CD4-positive, alpha-beta T cell (primary cell): ENCODE measurements at regions of chr19 and their contacts with region 1.

Region 1: DNA sequence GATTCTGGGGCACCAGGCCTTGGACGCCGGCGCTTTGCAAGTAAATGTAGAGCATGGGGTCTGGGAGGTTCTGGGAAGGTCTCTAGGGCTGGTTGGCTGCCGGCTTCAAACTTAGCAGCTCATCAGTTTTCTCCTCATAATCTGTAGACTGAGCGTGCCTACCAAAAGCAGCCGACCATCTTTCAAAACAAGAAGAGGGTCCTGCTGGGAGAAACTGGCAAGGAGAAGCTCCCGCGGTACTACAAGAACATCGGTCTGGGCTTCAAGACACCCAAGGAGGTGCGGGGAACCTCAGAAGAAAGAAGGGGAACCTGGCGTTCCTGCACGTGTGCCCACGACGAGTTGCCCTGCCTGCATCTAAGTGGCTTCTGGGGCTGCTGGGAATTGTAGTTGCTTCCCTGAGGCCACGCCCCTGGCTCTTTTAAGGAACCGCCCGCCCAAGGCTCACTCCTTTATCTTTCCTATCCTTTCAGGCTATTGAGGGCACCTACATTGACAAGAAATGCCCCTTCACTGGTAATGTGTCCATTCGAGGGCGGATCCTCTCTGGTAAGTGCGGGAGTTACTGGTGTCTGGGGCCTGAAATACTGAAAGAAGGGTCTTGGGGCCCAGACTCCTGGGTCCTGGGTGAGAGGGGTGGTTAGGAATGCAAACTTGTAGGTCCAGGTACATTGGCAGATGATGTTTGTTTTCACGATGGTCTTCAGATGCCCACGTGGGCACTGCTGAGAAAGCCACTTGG is 984 bp downstream of the RPS11 start:
- DNase-seq: peak; percentile 52 to 93 (median 73)
- ATAC-seq: peak; percentile 19
- H3K4me3 ChIP-seq: peak overlapping the region; percentile 99
- H3K4me3 Mint-ChIP-seq: peak overlapping the region; percentile 99
- H3K27ac ChIP-seq: peak overlapping the region; percentile 94 to 96
- H3K27ac Mint-ChIP-seq: peak overlapping the region; percentile 98
- H3K4me1 ChIP-seq: peaks cover 72% of the 10 kb centered on the region
- H3K4me1 Mint-ChIP-seq: peaks cover 70% of the 10 kb centered on the region
- H3K27me3 ChIP-seq: no peaks in the 10 kb centered on the region
- H3K27me3 Mint-ChIP-seq: no peaks in the 10 kb centered on the region
- CTCF ChIP-seq: no peak

Region 2: DNA sequence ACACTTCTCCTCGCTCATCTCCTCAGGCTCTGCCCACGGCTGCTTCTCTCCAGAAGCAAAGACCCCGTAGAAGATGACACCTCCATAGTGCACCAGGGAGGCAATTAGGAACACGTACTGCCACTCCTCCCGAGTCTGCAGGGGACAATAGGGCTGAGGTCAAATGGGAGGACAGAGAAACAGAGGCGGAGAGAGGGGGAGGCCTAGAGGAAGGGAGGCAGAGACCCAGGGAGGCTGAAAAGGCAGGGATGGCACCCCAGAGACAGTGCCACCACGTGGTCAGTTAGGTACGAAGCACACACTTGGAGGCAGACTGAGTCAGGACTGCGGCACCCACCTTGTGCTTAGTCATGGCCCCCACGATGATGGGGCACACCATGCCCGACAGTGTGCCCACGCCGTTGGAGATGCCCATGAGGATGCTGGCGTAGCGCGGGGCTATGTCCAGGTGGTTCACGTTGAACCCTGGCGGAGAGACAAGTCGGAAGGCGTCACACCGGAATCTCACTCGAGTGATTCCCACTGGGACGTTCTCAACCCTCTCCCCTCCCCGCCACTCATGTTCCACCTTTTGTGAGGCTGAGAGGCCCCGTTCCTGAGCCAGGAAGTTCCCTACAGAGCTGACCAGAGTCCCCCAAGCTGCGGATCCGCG is 66.4 kb before region 1 on chr19:
- CTCF ChIA-PET with region 1: no interaction called
- POLR2A ChIA-PET with region 1: no interaction called
- intact Hi-C with region 1: no loop called
- DNase-seq: peak in 3 of 14 experiments; percentile 38 to 63 (median 48)
- ATAC-seq: peak; percentile 31
- H3K4me3 ChIP-seq: no peak overlapping the region
- H3K4me3 Mint-ChIP-seq: no peak overlapping the region
- H3K27ac ChIP-seq: no peak overlapping the region
- H3K27ac Mint-ChIP-seq: no peak overlapping the region
- H3K4me1 ChIP-seq: peaks cover 58% of the 10 kb centered on the region
- H3K4me1 Mint-ChIP-seq: peaks cover 61% of the 10 kb centered on the region
- H3K27me3 ChIP-seq: peaks cover 94 to 98% of the 10 kb centered on the region in 2 experiments
- H3K27me3 Mint-ChIP-seq: peaks cover 98% of the 10 kb centered on the region
- CTCF ChIP-seq: peak; percentile 18

Region 3: GRCh38 chr19:49451430-49452181 is 45.6 kb before region 1 on chr19 and contains the start of gene PIH1D1:
- CTCF ChIA-PET with region 1: interaction called, 3 read pairs
- POLR2A ChIA-PET with region 1: interaction called, 28 read pairs
- intact Hi-C with region 1: loop called (anchors 1 to 2 kb)
- DNase-seq: peak; percentile 84 to 98 (median 92)
- ATAC-seq: peak; percentile 61
- H3K4me3 ChIP-seq: peak within 1 kb of the TSS; percentile 99
- H3K4me3 Mint-ChIP-seq: peak within 1 kb of the TSS; percentile 94
- H3K27ac ChIP-seq: peak within 1 kb of the TSS; percentile 93 to 97
- H3K27ac Mint-ChIP-seq: peak within 1 kb of the TSS; percentile 98
- H3K4me1 ChIP-seq: peaks cover 69% of the 10 kb centered on the region
- H3K4me1 Mint-ChIP-seq: peaks cover 50% of the 10 kb centered on the region
- H3K27me3 ChIP-seq: no peaks in the 10 kb centered on the region
- H3K27me3 Mint-ChIP-seq: no peaks in the 10 kb centered on the region
- CTCF ChIP-seq: no peak
- total RNA-seq, gene PIH1D1: 145 to 151 TPM

Region 4: DNA sequence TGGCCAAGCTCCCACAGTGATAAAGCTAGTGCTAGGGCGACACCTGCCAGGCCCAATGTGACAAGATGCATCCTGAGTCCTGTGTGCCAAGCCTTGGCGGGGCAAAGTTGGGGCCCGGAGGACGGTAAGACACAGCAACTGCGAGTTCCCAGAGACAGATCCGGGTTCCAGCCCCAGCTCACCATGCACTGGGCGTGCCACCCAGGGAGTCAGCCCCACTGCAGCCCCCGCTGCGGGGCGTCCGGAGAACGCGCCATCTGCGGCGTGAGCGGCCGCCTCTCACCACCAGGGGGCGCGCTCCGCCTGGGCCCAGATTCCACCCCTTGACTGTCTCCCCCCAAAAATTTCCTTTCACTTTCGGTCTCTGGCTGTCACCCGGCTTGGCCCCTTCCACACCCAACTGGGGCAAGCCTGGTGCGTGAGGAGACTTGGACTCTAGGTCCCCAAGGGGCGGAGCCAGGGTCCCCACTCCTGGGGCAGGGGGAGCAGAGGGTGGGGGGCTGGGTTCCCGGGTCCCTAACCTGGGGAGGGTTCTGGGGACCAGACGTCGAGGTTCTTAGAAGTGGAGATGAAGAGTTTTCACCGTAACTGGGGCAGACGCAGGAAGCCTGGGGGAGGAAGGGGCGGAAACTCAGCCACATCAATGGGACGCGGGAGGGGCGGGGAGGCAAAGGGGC is 23.2 kb before region 1 on chr19 and contains the start of gene FLT3LG:
- CTCF ChIA-PET with region 1: interaction called, 8 read pairs
- POLR2A ChIA-PET with region 1: interaction called, 25 read pairs
- intact Hi-C with region 1: loop called in 1 of 2 experiments (anchors 2 kb)
- DNase-seq: peak; percentile 85 to 98 (median 90)
- ATAC-seq: peak; percentile 49
- H3K4me3 ChIP-seq: peak within 1 kb of the TSS; percentile 97
- H3K4me3 Mint-ChIP-seq: peak within 1 kb of the TSS; percentile 100
- H3K27ac ChIP-seq: peak within 1 kb of the TSS; percentile 90 to 98
- H3K27ac Mint-ChIP-seq: peak within 1 kb of the TSS; percentile 98
- H3K4me1 ChIP-seq: peaks cover 78% of the 10 kb centered on the region
- H3K4me1 Mint-ChIP-seq: peaks cover 59% of the 10 kb centered on the region
- H3K27me3 ChIP-seq: no peaks in the 10 kb centered on the region
- H3K27me3 Mint-ChIP-seq: no peaks in the 10 kb centered on the region
- CTCF ChIP-seq: peak; percentile 95
- total RNA-seq, gene FLT3LG: 311 to 325 TPM

Region 5: DNA sequence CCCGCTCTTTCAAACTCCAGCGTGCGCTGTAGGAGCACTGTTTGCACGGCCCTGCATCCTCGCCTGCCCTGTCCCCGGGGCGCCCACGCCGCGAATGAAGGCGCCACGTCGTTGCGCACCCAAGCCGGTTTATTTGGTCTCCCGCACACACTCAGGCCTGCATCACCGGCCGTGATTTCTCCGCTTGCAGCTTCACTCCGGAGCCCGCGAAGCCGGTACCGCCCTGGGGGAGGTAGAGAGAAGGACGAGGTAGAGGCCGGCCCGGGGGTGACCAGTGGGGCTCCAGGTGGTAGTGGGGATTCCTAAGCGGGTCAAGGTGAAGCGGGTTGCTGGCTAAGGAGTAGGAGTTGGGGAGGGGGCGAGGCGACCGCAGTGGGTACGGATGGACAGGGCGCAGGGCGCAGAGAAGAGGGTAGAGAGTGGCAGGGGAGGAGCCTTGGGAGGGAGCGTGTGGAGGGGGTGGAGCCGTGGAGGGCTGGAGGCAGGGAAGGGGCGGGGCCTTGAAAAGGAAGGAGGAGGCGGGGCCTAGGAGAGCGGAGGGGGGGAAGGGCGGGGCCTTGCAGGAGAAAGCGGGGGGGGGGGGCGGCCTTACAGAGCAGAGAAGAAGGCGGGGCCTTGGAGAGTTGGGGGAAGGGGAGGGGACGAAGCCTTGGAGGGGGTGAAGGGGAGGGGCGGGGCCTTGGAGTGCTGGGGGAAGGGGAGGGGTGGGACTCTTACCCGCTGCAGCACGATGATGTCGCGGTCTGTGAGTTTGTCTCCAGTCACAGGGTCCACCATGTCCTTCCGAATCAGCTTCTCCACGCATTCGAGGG is 58.6 kb after region 1 on chr19:
- CTCF ChIA-PET with region 1: interaction called, 3 read pairs
- POLR2A ChIA-PET with region 1: interaction called, 12 read pairs
- intact Hi-C with region 1: no loop called
- DNase-seq: peak; percentile 65 to 94 (median 84)
- ATAC-seq: peak; percentile 64
- H3K4me3 ChIP-seq: peak overlapping the region; percentile 68
- H3K4me3 Mint-ChIP-seq: peak overlapping the region; percentile 62
- H3K27ac ChIP-seq: peak overlapping the region; percentile 61 to 62
- H3K27ac Mint-ChIP-seq: peak overlapping the region; percentile 96
- H3K4me1 ChIP-seq: peaks cover 96% of the 10 kb centered on the region
- H3K4me1 Mint-ChIP-seq: peaks cover 74% of the 10 kb centered on the region
- H3K27me3 ChIP-seq: peaks cover 0 to 3% of the 10 kb centered on the region in 2 experiments
- H3K27me3 Mint-ChIP-seq: no peaks in the 10 kb centered on the region
- CTCF ChIP-seq: no peak

Region 6: DNA sequence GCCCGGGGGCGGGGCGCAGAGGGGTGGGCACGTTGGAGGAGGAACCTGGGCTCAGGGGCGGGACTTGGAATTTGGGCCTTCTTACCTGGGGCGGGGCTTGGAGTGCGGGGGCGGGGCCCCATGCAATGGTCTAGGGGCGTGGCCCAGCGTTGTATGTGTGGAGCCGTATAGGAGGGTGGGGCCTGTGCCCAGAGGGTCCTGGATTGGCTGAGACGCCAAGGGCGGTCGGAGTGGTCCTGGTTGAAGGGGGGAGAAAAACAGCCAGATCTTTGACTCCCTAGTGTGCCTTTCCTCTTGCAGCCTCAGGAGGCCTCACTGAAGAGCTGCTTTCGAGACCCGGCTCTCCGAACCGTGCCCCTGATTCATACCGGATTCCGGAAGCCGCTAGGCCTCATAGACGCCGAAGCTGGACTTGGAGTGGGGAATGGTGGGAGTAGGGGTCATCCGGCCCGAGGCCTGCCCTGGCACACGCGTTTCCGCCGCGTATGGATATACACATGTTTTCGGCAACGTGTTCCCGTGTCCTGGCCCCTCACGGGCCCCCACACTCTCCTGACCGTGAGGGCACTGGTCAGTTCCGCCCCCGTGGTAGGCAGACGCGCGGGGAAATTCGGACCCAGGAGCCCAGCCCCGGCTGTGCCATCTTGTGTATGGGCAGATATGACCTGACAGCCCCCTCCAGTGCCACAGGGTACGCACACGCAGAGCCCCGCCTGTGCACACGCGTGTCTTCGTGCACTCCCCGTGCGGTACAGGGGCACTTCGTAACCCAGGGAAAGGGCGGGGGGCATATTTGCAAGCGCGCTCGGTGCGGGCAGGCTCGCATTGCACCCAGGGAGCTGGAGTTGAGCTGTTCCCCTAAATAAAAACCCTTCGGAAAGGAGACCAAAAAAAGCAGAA is 93.1 kb after region 1 on chr19:
- CTCF ChIA-PET with region 1: interaction called, 3 read pairs
- POLR2A ChIA-PET with region 1: interaction called, 13 read pairs
- intact Hi-C with region 1: no loop called
- DNase-seq: peak; percentile 87 to 99 (median 94)
- ATAC-seq: peak; percentile 70
- H3K4me3 ChIP-seq: peak overlapping the region; percentile 96
- H3K4me3 Mint-ChIP-seq: peak overlapping the region; percentile 82
- H3K27ac ChIP-seq: peak overlapping the region; percentile 77 to 91
- H3K27ac Mint-ChIP-seq: peak overlapping the region; percentile 82
- H3K4me1 ChIP-seq: peaks cover 49% of the 10 kb centered on the region
- H3K4me1 Mint-ChIP-seq: peaks cover 41% of the 10 kb centered on the region
- H3K27me3 ChIP-seq: no peaks in the 10 kb centered on the region
- H3K27me3 Mint-ChIP-seq: no peaks in the 10 kb centered on the region
- CTCF ChIP-seq: no peak

Region 7: GRCh38 chr19:49665351-49666119 is 168.3 kb after region 1 on chr19 and contains the starts of genes BCL2L12 and IRF3:
- CTCF ChIA-PET with region 1: no interaction called
- POLR2A ChIA-PET with region 1: interaction called, 12 read pairs
- intact Hi-C with region 1: no loop called
- DNase-seq: peak; percentile 99 to 100 (median 99)
- ATAC-seq: peak; percentile 78
- H3K4me3 ChIP-seq: peak within 1 kb of the TSS; percentile 62
- H3K4me3 Mint-ChIP-seq: peak within 1 kb of the TSS; percentile 95
- H3K27ac ChIP-seq: peak within 1 kb of the TSS; percentile 57 to 90
- H3K27ac Mint-ChIP-seq: peak within 1 kb of the TSS; percentile 88
- H3K4me1 ChIP-seq: peaks cover 44% of the 10 kb centered on the region
- H3K4me1 Mint-ChIP-seq: peaks cover 18% of the 10 kb centered on the region
- H3K27me3 ChIP-seq: no peaks in the 10 kb centered on the region
- H3K27me3 Mint-ChIP-seq: no peaks in the 10 kb centered on the region
- CTCF ChIP-seq: no peak
- total RNA-seq, gene BCL2L12: 9.9 to 11.3 TPM
- total RNA-seq, gene IRF3: 109 to 119 TPM

Region 8: DNA sequence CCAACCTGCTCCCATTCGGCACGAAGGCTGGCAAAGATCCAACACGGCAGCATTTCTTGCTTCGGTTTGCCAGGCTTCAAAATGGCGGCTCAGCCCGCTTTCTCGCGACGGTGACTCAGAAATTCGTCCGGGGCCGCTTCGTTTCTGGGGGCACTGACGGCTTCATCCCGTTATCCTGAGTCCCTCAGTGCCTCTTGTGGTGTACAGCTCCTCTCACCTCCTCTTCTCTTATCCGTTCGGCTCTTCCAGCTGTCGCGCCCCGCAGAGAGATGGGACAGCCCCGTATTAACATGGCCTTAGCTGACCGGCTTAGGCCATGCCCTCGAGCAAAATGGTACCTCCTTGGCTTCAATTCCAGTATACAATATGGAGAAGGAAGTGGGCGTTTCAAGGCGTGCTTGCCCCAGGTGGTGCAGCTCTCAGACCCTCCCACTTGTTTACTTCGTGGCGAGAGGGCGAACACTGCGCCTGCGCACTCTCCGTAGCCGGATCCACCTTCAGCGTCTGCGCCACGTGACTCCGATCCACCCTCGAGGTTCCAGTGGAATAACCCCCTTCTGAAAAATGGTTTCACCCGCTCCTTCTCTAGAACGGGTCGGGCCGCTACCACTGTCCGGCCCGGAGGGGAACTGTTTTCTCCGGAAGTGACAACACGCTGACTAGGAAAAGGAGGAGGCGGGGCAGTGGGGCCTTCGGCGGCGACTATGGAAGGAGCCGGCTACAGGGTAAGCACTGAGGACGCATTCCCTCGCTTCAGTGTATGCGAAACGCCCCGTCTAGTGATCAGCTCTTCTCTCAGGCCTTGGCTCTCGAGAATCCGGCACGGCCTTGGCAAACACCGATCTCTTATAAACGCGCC is 380.0 kb after region 1 on chr19 and contains the starts of genes AKT1S1 and TBC1D17:
- CTCF ChIA-PET with region 1: no interaction called
- POLR2A ChIA-PET with region 1: interaction called, 11 read pairs
- intact Hi-C with region 1: no loop called
- DNase-seq: peak; percentile 95 to 100 (median 98)
- ATAC-seq: peak; percentile 60
- H3K4me3 ChIP-seq: peak within 1 kb of the TSS; percentile 88
- H3K4me3 Mint-ChIP-seq: no peak within 1 kb of the TSS
- H3K27ac ChIP-seq: peak within 1 kb of the TSS; percentile 98 to 100
- H3K27ac Mint-ChIP-seq: no peak within 1 kb of the TSS
- H3K4me1 ChIP-seq: peaks cover 35% of the 10 kb centered on the region
- H3K4me1 Mint-ChIP-seq: peaks cover 18% of the 10 kb centered on the region
- H3K27me3 ChIP-seq: no peaks in the 10 kb centered on the region
- H3K27me3 Mint-ChIP-seq: no peaks in the 10 kb centered on the region
- CTCF ChIP-seq: no peak
- total RNA-seq, gene AKT1S1: 15.1 to 15.8 TPM
- total RNA-seq, gene TBC1D17: 35.5 to 35.8 TPM